CD14-positive monocyte (primary cell): ENCODE measurements at regions of chr18 and their contacts with region 1.

Region 1: GRCh38 chr18:394997-395383 is 105.5 kb downstream of the COLEC12 start:
- DNase-seq: no peak
- H3K4me3 ChIP-seq: no peak overlapping the region
- H3K4me3 Mint-ChIP-seq: no peak overlapping the region
- H3K27ac ChIP-seq: no peak overlapping the region
- H3K27ac Mint-ChIP-seq: no peak overlapping the region
- H3K4me1 ChIP-seq: peaks cover 45 to 50% of the 10 kb centered on the region in 2 donors
- H3K4me1 Mint-ChIP-seq: peaks cover 71% of the 10 kb centered on the region
- H3K27me3 ChIP-seq: no peaks in the 10 kb centered on the region
- H3K27me3 Mint-ChIP-seq: peaks cover 0 to 2% (median 0%) of the 10 kb centered on the region in 3 donors
- CTCF ChIP-seq: no peak

Region 2: GRCh38 chr18:361939-362309 is 33.1 kb before region 1 on chr18:
- intact Hi-C with region 1: loop called in 1 of 2 experiments (anchors 5 kb)
- DNase-seq: peak in 2 of 3 donors; percentile 16 to 59
- H3K4me3 ChIP-seq: no peak overlapping the region
- H3K4me3 Mint-ChIP-seq: peak overlapping the region in 1 of 2 donors; percentile 33
- H3K27ac ChIP-seq: no peak overlapping the region
- H3K27ac Mint-ChIP-seq: peak overlapping the region in 3 of 7 donors; percentile 3 to 66 (median 37)
- H3K4me1 ChIP-seq: peaks cover 40 to 45% of the 10 kb centered on the region in 2 donors
- H3K4me1 Mint-ChIP-seq: peaks cover 45% of the 10 kb centered on the region
- H3K27me3 ChIP-seq: no peaks in the 10 kb centered on the region
- H3K27me3 Mint-ChIP-seq: peaks cover 3 to 5% (median 3%) of the 10 kb centered on the region in 3 donors
- CTCF ChIP-seq: no peak